ENCODE measurements at regions of chr4 and their contacts with region 1.

Region 1: DNA sequence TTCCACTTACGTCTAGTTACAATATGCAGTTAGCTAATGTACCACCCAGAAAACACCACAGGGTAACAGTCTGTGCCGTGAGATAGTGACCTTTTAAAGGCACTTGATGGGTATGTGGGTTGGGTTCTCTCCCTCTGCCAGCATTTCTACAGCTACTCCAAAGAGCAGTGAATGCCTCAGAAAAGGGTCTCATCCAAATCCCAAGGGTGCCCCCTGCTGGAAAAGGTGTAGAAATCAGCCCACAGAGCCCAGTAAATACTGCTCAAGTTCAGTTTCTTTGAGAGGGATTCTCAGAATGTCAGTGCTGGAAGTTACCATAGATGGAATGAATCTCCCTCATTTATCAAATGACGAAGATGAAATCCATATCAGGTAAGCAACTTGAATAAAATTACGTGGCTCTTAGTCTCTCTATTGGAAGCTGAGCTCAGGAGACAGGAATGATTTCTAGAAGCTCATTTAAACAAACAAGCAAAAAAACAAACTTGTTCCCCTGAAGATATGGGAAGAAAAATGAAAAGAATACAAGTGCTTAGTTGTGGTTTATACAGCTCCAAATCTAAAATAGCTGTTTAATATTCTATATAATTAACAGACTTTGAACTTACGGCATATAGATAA is 9.5 kb downstream of the RNF175 start:
- DNase-seq: peak; percentile 21 to 70 (median 56)
- ATAC-seq: peak; percentile 64
- H3K4me3 ChIP-seq: no peak overlapping the region
- H3K4me3 Mint-ChIP-seq: no peak overlapping the region
- H3K27ac ChIP-seq: no peak overlapping the region
- H3K27ac Mint-ChIP-seq: no peak overlapping the region
- H3K4me1 ChIP-seq: peaks cover 10% of the 10 kb centered on the region
- H3K4me1 Mint-ChIP-seq: peaks cover 12% of the 10 kb centered on the region
- H3K27me3 ChIP-seq: no peaks in the 10 kb centered on the region
- H3K27me3 Mint-ChIP-seq: peaks cover 4% of the 10 kb centered on the region
- CTCF ChIP-seq: peak; percentile 76

Region 2: DNA sequence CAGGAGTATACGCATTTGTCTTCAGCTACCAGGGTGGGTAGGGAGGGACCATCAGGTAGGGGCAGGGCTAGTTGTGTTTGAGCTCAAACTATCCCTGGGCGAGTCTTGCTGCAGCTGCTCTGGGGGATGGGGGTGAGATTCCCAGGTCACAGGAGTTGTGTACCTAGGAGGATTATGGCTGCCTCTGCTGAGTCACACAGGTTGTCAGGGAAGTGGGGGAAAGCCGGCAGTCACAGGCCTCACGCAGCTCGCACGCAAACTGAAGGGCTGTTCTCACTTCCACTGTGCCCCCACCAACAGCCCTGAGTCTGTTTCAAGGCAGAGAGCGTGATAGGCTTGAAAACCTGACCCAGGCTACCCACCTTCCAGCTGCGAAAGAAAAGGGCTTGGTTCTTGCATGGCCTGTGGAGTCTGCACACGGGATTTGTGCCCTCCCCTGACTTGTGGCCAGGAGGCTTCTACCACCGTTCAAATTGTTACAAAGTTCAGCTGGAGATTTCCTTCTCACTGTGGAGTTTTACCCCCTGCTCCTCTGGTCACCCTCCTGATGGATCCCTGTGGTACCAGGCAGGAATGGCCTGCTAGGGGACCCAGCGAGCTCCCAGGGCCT is 906.7 kb before region 1 on chr4:
- CTCF ChIA-PET with region 1: no interaction called
- POLR2A ChIA-PET with region 1: no interaction called
- intact Hi-C with region 1: loop called in 1 of 2 experiments (anchors 10 kb)
- DNase-seq: no peak
- ATAC-seq: no peak
- H3K4me3 ChIP-seq: no peak overlapping the region
- H3K4me3 Mint-ChIP-seq: no peak overlapping the region
- H3K27ac ChIP-seq: no peak overlapping the region
- H3K27ac Mint-ChIP-seq: no peak overlapping the region
- H3K4me1 ChIP-seq: peaks cover 4% of the 10 kb centered on the region
- H3K4me1 Mint-ChIP-seq: peaks cover 21% of the 10 kb centered on the region
- H3K27me3 ChIP-seq: no peaks in the 10 kb centered on the region
- H3K27me3 Mint-ChIP-seq: no peaks in the 10 kb centered on the region
- CTCF ChIP-seq: no peak